Endothelial cell of umbilical vein (primary cell): ENCODE measurements at regions of chr11 and their contacts with region 1.

Region 1: GRCh38 chr11:65111744-65112414 is at the start of gene TM7SF2:
- DNase-seq: peak; percentile 88
- H3K4me3 ChIP-seq: peak within 1 kb of the TSS; percentile 33 to 51 (median 47)
- H3K27ac ChIP-seq: no peak within 1 kb of the TSS
- H3K4me1 ChIP-seq: peaks cover 17% of the 10 kb centered on the region
- H3K27me3 ChIP-seq: no peaks in the 10 kb centered on the region
- CTCF ChIP-seq: no peak
- POLR2A ChIP-seq: peak; percentile 85
- total RNA-seq, gene TM7SF2: 11.6 and 16.2 TPM in 2 replicates

Region 2: GRCh38 chr11:64916775-64917662 is 194.9 kb before region 1 on chr11 and contains the start of gene ATG2A:
- CTCF ChIA-PET with region 1: no interaction called
- POLR2A ChIA-PET with region 1: no interaction called
- dilution Hi-C with region 1: no loop called
- intact Hi-C with region 1: loop called (anchors 5 kb)
- DNase-seq: peak; percentile 100
- H3K4me3 ChIP-seq: peak within 1 kb of the TSS; percentile 10 to 86 (median 72)
- H3K27ac ChIP-seq: peak within 1 kb of the TSS; percentile 49
- H3K4me1 ChIP-seq: peaks cover 11% of the 10 kb centered on the region
- H3K27me3 ChIP-seq: no peaks in the 10 kb centered on the region
- CTCF ChIP-seq: no peak
- POLR2A ChIP-seq: peak; percentile 79
- total RNA-seq, gene ATG2A: 24.3 and 27.4 TPM in 2 replicates

Region 3: DNA sequence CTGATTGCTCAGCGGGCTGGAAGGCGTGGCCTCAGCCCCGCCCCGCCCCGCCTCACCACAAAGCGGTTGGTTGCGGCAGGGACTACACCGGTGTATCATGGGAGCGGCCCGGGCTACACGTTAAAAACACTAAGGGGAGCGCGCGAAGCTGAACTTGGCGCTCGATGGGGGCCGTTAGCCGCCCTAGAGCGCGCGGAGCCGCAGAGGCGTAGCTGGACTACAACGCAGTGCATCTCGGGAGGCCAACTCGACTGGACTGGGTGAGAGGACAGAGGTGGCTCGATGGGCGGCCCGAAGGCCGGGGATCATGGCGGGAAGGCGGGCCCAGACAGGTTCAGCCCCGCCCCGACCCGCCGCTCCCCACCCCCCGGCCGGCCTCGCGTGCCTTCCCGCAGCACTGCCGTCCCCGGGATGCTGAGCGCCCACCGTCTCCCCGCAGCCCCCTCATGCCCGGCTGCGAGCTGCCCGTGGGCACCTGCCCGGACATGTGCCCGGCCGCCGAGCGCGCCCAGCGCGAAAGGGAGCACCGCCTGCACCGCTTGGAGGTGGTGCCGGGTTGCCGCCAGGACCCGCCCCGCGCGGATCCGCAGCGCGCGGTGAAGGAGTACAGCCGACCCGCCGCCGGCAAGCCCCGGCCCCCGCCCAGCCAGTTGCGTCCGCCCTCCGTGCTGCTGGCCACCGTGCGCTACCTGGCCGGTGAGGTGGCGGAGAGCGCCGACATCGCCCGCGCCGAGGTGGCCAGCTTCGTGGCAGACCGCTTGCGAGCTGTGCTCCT is 70.8 kb before region 1 on chr11 and contains the start of gene SAC3D1:
- CTCF ChIA-PET with region 1: no interaction called
- POLR2A ChIA-PET with region 1: no interaction called
- dilution Hi-C with region 1: no loop called
- intact Hi-C with region 1: loop called (anchors 2 kb)
- DNase-seq: peak; percentile 92
- H3K4me3 ChIP-seq: peak within 1 kb of the TSS; percentile 44 to 62 (median 58)
- H3K27ac ChIP-seq: peak within 1 kb of the TSS; percentile 66
- H3K4me1 ChIP-seq: peaks cover 9% of the 10 kb centered on the region
- H3K27me3 ChIP-seq: no peaks in the 10 kb centered on the region
- CTCF ChIP-seq: no peak
- POLR2A ChIP-seq: peak; percentile 67
- total RNA-seq, gene SAC3D1: 16.6 and 18.0 TPM in 2 replicates

Region 4: DNA sequence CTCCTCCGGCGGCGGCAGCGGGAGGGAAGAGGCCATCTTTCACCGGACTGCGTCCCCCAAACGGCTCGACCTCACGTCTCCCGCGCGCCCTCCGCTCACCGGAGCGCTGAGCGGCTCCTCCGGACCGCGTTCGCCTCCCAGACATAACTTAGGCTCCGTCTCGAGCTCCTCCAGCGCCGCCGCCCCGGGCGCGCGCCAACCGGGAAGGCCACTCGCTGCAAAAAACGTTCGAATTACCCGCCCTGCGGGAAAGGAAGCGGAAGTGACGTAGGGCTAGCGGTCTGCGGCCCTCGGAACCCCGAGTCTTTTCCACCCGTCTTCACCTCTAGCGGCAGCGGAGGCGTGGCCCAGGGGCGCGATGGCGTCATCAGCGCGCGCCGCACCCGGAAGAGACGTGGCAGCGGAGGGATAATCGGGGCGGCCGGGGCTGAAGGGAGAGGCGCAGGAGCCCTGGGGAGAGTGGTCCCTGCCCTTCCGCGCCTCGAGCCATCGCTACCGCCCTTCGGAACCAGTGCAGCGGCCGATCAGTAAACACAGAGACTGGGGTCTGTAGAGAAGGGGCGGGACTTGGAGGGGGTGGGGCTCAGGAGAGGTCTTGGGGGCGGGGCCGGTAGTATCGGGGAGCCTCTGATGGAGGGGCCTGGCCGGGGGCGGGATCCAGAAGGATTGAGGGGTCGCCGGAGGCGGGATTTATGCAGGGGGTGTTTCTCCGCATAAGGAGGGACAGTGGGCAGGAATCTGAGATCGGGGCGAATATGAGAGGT is 27.9 kb before region 1 on chr11 and contains the starts of genes CDCA5 and ZFPL1:
- CTCF ChIA-PET with region 1: no interaction called
- POLR2A ChIA-PET with region 1: no interaction called
- dilution Hi-C with region 1: no loop called
- intact Hi-C with region 1: loop called (anchors 1 kb)
- DNase-seq: peak; percentile 96
- H3K4me3 ChIP-seq: peak within 1 kb of the TSS; percentile 58 to 92 (median 83)
- H3K27ac ChIP-seq: peak within 1 kb of the TSS; percentile 61
- H3K4me1 ChIP-seq: peaks cover 17% of the 10 kb centered on the region
- H3K27me3 ChIP-seq: no peaks in the 10 kb centered on the region
- CTCF ChIP-seq: no peak
- POLR2A ChIP-seq: no peak
- total RNA-seq, gene CDCA5: 34.1 and 35.7 TPM in 2 replicates
- total RNA-seq, gene ZFPL1: 37.6 and 45.1 TPM in 2 replicates

Region 5: DNA sequence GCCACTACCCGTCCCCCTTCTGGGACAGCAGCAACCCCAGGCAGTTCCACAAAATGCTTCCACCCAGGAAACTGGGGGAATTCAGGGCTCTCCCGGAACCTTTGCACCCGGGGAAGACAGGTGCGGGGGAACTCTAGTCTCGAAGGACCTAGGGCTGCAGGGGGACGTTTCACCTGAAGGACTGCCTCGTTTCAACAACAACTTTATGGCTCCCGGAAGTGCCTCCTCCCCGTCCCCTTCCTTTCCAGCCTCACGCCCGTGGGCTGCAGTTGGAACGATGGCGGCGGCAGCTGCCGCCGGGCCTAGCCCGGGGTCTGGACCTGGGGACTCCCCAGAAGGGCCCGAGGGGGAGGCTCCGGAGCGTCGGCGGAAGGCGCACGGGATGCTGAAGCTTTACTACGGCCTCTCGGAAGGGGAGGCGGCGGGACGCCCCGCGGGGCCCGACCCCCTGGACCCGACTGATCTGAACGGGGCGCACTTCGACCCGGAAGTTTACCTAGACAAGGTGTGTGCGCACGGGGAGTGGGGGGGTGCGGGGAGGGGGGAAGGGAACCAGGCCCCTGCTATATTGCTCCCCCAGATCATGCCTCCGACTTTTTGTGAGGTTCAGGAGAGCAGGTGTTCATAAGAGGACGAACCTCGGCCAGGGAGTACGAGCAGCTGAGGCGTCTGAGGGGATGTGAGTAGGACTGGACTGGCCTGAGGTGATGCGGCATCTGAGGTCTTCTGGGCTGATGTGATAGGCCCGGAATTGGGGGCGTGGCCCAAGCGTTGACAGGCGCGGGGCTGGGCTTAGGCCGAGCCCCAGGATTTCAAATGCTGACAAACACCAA is 15.7 kb before region 1 on chr11 and contains the start of gene VPS51:
- CTCF ChIA-PET with region 1: interaction called, 56 read pairs
- POLR2A ChIA-PET with region 1: interaction called, 6 read pairs
- dilution Hi-C with region 1: no loop called
- intact Hi-C with region 1: loop called (anchors 2 kb)
- DNase-seq: peak; percentile 76
- H3K4me3 ChIP-seq: peak within 1 kb of the TSS; percentile 55 to 62 (median 56)
- H3K27ac ChIP-seq: peak within 1 kb of the TSS; percentile 46
- H3K4me1 ChIP-seq: peaks cover 6% of the 10 kb centered on the region
- H3K27me3 ChIP-seq: no peaks in the 10 kb centered on the region
- CTCF ChIP-seq: no peak
- POLR2A ChIP-seq: peak; percentile 94
- total RNA-seq, gene VPS51: 102 and 108 TPM in 2 replicates

Region 6: GRCh38 chr11:65180877-65181568 is 69.1 kb after region 1 on chr11:
- CTCF ChIA-PET with region 1: interaction called, 16 read pairs
- POLR2A ChIA-PET with region 1: no interaction called
- dilution Hi-C with region 1: no loop called
- intact Hi-C with region 1: loop called (anchors 2 kb)
- DNase-seq: peak; percentile 67
- H3K4me3 ChIP-seq: peak overlapping the region; percentile 54 to 86 (median 57)
- H3K27ac ChIP-seq: peak overlapping the region; percentile 23
- H3K4me1 ChIP-seq: peaks cover 9% of the 10 kb centered on the region
- H3K27me3 ChIP-seq: no peaks in the 10 kb centered on the region
- CTCF ChIP-seq: peak; percentile 44 to 68
- POLR2A ChIP-seq: no peak

Region 7: DNA sequence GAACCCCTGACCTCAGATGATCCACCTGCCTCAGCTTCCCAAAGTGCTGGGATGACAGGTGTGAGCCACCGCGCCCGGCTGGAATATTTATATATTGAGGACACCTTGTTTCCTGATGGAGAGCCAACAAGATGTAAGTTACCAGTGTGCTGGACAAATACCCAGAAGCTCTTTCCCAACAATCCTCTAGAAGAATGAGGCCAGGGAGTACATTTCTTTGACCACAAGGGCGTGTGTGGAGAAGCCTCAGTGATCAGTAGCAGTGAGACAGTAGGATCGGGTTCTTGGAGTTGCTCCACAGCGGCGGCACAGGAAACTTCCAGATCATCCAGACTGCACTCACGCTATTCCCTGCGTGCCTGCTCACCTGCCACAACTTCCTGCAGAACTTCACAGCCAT is 139.6 kb after region 1 on chr11:
- CTCF ChIA-PET with region 1: interaction called, 7 read pairs
- POLR2A ChIA-PET with region 1: no interaction called
- dilution Hi-C with region 1: no loop called
- intact Hi-C with region 1: loop called (anchors 2 kb)
- DNase-seq: no peak
- H3K4me3 ChIP-seq: no peak overlapping the region
- H3K27ac ChIP-seq: no peak overlapping the region
- H3K4me1 ChIP-seq: no peaks in the 10 kb centered on the region
- H3K27me3 ChIP-seq: no peaks in the 10 kb centered on the region
- CTCF ChIP-seq: no peak
- POLR2A ChIP-seq: no peak